ENCODE measurements at regions of chr22 and their contacts with region 1.

Region 1: GRCh38 chr22:40877488-40877887 is 15.6 kb upstream of the DNAJB7 start:
- DNase-seq: no peak
- ATAC-seq: no peak
- H3K4me3 ChIP-seq: no peak overlapping the region
- H3K4me3 Mint-ChIP-seq: no peak overlapping the region
- H3K27ac ChIP-seq: no peak overlapping the region
- H3K27ac Mint-ChIP-seq: no peak overlapping the region
- H3K4me1 ChIP-seq: no peaks in the 10 kb centered on the region
- H3K4me1 Mint-ChIP-seq: no peaks in the 10 kb centered on the region
- H3K27me3 ChIP-seq: no peaks in the 10 kb centered on the region
- H3K27me3 Mint-ChIP-seq: no peaks in the 10 kb centered on the region

Region 2: DNA sequence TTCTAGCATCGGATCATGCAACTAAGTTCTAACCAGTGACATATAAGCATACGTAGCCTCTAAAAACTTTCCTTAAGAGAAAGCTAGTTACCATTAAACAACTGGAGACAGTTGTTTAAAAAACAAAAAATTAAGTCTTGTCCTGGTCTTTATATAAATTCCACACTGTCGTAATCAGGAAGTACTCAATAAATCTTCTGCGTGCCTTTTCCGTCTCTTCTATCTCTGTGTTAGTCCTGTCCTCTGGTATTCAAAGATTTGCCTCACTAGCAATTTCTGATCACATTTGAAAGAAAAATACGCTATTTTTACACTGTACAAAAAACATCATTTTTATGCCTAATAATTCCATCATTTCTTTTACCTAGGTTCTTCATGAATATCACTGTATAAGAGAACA is 48.4 kb before region 1 on chr22:
- CTCF ChIA-PET with region 1: no interaction called
- POLR2A ChIA-PET with region 1: no interaction called
- DNase-seq: no peak
- ATAC-seq: no peak
- H3K4me3 ChIP-seq: no peak overlapping the region
- H3K4me3 Mint-ChIP-seq: no peak overlapping the region
- H3K27ac ChIP-seq: no peak overlapping the region
- H3K27ac Mint-ChIP-seq: no peak overlapping the region
- H3K4me1 ChIP-seq: no peaks in the 10 kb centered on the region
- H3K4me1 Mint-ChIP-seq: no peaks in the 10 kb centered on the region
- H3K27me3 ChIP-seq: no peaks in the 10 kb centered on the region
- H3K27me3 Mint-ChIP-seq: no peaks in the 10 kb centered on the region

Region 3: GRCh38 chr22:40975366-40975765 is 97.9 kb after region 1 on chr22:
- CTCF ChIA-PET with region 1: no interaction called
- POLR2A ChIA-PET with region 1: no interaction called
- DNase-seq: no peak
- ATAC-seq: no peak
- H3K4me3 ChIP-seq: no peak overlapping the region
- H3K4me3 Mint-ChIP-seq: no peak overlapping the region
- H3K27ac ChIP-seq: no peak overlapping the region
- H3K27ac Mint-ChIP-seq: no peak overlapping the region
- H3K4me1 ChIP-seq: no peaks in the 10 kb centered on the region
- H3K4me1 Mint-ChIP-seq: no peaks in the 10 kb centered on the region
- H3K27me3 ChIP-seq: no peaks in the 10 kb centered on the region
- H3K27me3 Mint-ChIP-seq: no peaks in the 10 kb centered on the region

Region 4: GRCh38 chr22:41038732-41039445 is 161.4 kb after region 1 on chr22:
- CTCF ChIA-PET with region 1: no interaction called
- POLR2A ChIA-PET with region 1: interaction called in 1 of 2 experiments, 12 read pairs
- DNase-seq: no peak
- ATAC-seq: no peak
- H3K4me3 ChIP-seq: no peak overlapping the region
- H3K4me3 Mint-ChIP-seq: no peak overlapping the region
- H3K27ac ChIP-seq: no peak overlapping the region
- H3K27ac Mint-ChIP-seq: no peak overlapping the region
- H3K4me1 ChIP-seq: no peaks in the 10 kb centered on the region
- H3K4me1 Mint-ChIP-seq: no peaks in the 10 kb centered on the region
- H3K27me3 ChIP-seq: no peaks in the 10 kb centered on the region
- H3K27me3 Mint-ChIP-seq: peaks cover 0 to 3% of the 10 kb centered on the region in 2 donors